Calu3 (cell line): ENCODE measurements at regions of chr1 and their contacts with region 1.

Region 1: GRCh38 chr1:206982216-206982615 is 12.0 kb upstream of the FCAMR start:
- DNase-seq: peak; percentile 76
- H3K4me3 Mint-ChIP-seq: no peak overlapping the region
- H3K27ac Mint-ChIP-seq: no peak overlapping the region
- H3K4me1 Mint-ChIP-seq: peaks cover 59% of the 10 kb centered on the region
- H3K27me3 Mint-ChIP-seq: no peaks in the 10 kb centered on the region
- CTCF ChIP-seq: peak; percentile 61

Region 2: GRCh38 chr1:206612129-206612876 is 369.9 kb before region 1 on chr1 and contains the start of gene EIF2D:
- CTCF ChIA-PET with region 1: interaction called, 5 read pairs
- intact Hi-C with region 1: loop called (anchors 1 kb)
- DNase-seq: peak; percentile 99
- H3K4me3 Mint-ChIP-seq: peak within 1 kb of the TSS; percentile 89
- H3K27ac Mint-ChIP-seq: peak within 1 kb of the TSS; percentile 93
- H3K4me1 Mint-ChIP-seq: peaks cover 18% of the 10 kb centered on the region
- H3K27me3 Mint-ChIP-seq: peaks cover 20% of the 10 kb centered on the region
- CTCF ChIP-seq: peak; percentile 97
- total RNA-seq, gene EIF2D: 41.8 and 45.1 TPM in 2 replicates

Region 3: DNA sequence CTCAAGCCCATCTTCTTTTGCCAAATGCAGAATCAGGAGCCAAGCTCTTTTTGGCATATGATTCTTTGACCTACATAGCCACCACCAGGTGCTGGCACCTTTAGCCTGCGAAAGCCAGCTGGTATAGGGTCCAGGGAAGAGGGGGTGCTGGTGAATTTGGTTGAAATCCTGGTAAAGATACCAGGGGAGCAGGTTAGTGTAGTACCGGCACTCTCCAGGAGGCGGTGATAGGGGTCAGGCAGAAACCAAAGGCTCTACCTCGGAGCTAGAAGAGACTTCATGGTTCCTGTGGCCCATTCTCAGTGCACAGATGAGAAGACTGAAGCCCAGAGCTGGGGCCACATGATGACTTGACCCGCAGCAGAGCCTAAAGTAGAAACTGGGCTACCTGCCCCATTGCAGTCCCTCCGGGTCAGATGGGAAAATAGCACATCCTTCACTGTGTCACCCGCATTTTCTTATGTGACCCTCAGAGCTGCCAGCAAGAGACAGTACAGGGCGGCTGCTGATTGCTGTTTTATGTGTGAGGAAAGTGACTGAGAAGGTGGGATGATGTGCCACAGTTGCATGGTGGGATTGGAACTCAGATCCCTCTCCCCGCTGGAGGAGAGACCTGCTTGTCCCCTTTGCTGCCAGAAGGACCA is 247.6 kb before region 1 on chr1:
- CTCF ChIA-PET with region 1: interaction called, 25 read pairs
- intact Hi-C with region 1: loop called (anchors 1 kb)
- DNase-seq: peak; percentile 77
- H3K4me3 Mint-ChIP-seq: no peak overlapping the region
- H3K27ac Mint-ChIP-seq: no peak overlapping the region
- H3K4me1 Mint-ChIP-seq: peaks cover 13% of the 10 kb centered on the region
- H3K27me3 Mint-ChIP-seq: no peaks in the 10 kb centered on the region
- CTCF ChIP-seq: peak; percentile 89

Region 4: DNA sequence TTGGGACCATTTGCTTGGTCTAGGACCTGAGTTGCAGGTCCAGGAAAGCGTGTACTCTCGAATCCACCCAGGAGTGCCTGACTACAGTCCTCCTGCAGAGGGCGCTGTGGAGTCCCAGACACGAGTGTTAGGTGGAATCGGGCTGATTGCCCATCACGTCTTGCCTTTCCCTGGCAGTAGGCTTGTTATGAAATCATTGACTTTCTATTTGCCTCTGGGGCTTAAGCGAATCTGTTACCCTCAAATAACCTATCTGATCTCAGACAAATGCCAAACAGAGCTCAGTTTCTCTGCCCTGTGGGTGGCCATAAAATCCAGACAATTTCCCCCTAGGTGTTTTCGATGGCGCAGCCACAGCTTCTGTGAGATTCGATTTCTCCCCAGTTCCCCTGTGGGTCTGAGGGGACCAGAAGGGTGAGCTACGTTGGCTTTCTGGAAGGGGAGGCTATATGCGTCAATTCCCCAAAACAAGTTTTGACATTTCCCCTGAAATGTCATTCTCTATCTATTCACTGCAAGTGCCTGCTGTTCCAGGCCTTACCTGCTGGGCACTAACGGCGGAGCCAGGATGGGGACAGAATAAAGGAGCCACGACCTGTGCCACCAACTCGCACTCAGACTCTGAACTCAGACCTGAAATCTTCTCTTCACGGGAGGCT is 117.1 kb before region 1 on chr1 and contains the start of gene IL20:
- CTCF ChIA-PET with region 1: interaction called, 3 read pairs
- intact Hi-C with region 1: loop called (anchors 2 kb)
- DNase-seq: peak; percentile 88
- H3K4me3 Mint-ChIP-seq: no peak within 1 kb of the TSS
- H3K27ac Mint-ChIP-seq: no peak within 1 kb of the TSS
- H3K4me1 Mint-ChIP-seq: no peaks in the 10 kb centered on the region
- H3K27me3 Mint-ChIP-seq: peaks cover 85% of the 10 kb centered on the region
- CTCF ChIP-seq: peak; percentile 86
- total RNA-seq, gene IL20: not detected in 2 replicates

Region 5: DNA sequence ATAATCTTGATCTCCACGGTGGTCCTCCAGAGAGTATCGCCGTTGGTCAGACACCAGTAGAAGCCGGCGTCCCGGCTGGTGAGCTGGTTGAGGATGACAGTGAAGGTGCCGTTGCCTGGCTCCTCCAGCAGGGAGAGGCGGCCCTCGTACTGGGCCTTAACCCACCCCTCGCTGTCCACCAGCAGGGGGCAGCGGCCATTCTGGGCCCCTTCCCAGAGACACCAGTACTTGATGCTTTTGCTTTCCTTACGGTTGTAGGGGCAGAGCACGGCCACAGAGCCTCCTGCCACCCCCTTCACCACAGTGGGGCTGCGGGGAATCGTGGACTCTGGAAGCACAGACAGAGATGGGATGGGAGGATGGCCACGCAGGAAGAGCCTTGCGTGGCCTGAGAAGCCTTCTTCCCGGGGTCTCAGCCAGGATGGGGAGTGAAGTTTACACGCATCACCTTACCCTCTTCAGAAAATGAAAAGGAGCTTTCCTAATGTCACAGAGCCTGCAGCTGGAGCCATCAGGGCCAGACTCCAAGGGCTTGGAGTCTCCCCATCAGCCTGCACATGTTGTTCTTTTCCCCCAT is 46.6 kb before region 1 on chr1:
- CTCF ChIA-PET with region 1: interaction called, 10 read pairs
- intact Hi-C with region 1: loop called (anchors 2 kb)
- DNase-seq: peak; percentile 70
- H3K4me3 Mint-ChIP-seq: no peak overlapping the region
- H3K27ac Mint-ChIP-seq: no peak overlapping the region
- H3K4me1 Mint-ChIP-seq: peaks cover 16% of the 10 kb centered on the region
- H3K27me3 Mint-ChIP-seq: no peaks in the 10 kb centered on the region
- CTCF ChIP-seq: peak; percentile 69

Region 6: GRCh38 chr1:206952171-206952570 is 30.0 kb before region 1 on chr1:
- CTCF ChIA-PET with region 1: interaction called, 8 read pairs
- intact Hi-C with region 1: loop called (anchors 2 kb)
- DNase-seq: peak; percentile 74
- H3K4me3 Mint-ChIP-seq: peak overlapping the region; percentile 20
- H3K27ac Mint-ChIP-seq: peak overlapping the region; percentile 70
- H3K4me1 Mint-ChIP-seq: peaks cover 93% of the 10 kb centered on the region
- H3K27me3 Mint-ChIP-seq: no peaks in the 10 kb centered on the region
- CTCF ChIP-seq: no peak

Region 7: DNA sequence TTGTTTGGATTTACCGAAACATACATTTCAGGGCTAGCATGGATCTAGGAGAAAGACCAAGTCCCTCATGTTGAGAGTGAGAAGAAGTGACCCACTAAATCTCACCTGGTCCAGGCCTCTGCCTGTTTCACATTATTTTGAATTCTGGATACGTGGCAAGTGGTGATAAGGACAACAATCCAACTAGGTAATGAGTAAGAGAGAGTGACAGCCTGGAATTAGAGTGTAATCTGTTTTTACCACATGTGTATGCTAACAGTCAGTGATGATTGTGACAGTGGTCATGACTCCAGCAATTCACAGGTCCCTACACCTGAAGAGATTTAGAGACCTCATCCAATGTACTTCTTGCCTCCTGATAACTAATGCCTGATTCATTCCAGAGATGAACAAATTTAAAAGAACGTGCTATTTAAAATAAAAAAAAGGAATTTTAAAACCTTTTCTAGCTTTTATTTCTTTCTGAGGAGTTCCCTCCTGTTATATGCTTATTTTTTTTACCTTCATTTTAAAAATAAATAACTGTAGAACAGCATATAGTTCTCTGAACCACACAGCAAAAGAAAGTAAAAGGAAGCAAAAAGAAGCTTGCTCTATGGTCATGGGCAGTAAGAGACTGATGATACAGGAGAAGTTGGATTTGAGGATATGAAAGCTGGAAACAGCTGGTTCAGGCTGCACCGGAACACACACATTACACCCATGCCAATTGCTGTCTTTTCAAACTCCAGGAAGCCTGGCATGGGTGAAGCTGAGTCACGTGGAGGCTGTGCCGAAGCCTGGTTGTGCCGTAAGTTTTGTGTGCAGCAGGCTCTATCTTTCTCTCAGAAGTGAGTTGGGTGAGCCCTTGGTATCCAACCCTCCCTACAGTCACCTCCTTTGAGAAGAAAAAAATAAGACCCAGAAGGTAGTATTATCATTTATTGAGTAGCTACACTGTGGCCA is 35.7 kb after region 1 on chr1:
- CTCF ChIA-PET with region 1: interaction called, 16 read pairs
- intact Hi-C with region 1: no loop called
- DNase-seq: no peak
- H3K4me3 Mint-ChIP-seq: no peak overlapping the region
- H3K27ac Mint-ChIP-seq: peak overlapping the region; percentile 98
- H3K4me1 Mint-ChIP-seq: peaks cover 89% of the 10 kb centered on the region
- H3K27me3 Mint-ChIP-seq: no peaks in the 10 kb centered on the region
- CTCF ChIP-seq: no peak

Region 8: GRCh38 chr1:207486198-207486597 is 504.0 kb after region 1 on chr1:
- CTCF ChIA-PET with region 1: no interaction called
- intact Hi-C with region 1: no loop called
- DNase-seq: no peak
- H3K4me3 Mint-ChIP-seq: no peak overlapping the region
- H3K27ac Mint-ChIP-seq: no peak overlapping the region
- H3K4me1 Mint-ChIP-seq: peaks cover 8% of the 10 kb centered on the region
- H3K27me3 Mint-ChIP-seq: peaks cover 27% of the 10 kb centered on the region
- CTCF ChIP-seq: no peak